Mammary epithelial cell (primary cell): ENCODE measurements at regions of chr7 and their contacts with region 1.

Region 1: DNA sequence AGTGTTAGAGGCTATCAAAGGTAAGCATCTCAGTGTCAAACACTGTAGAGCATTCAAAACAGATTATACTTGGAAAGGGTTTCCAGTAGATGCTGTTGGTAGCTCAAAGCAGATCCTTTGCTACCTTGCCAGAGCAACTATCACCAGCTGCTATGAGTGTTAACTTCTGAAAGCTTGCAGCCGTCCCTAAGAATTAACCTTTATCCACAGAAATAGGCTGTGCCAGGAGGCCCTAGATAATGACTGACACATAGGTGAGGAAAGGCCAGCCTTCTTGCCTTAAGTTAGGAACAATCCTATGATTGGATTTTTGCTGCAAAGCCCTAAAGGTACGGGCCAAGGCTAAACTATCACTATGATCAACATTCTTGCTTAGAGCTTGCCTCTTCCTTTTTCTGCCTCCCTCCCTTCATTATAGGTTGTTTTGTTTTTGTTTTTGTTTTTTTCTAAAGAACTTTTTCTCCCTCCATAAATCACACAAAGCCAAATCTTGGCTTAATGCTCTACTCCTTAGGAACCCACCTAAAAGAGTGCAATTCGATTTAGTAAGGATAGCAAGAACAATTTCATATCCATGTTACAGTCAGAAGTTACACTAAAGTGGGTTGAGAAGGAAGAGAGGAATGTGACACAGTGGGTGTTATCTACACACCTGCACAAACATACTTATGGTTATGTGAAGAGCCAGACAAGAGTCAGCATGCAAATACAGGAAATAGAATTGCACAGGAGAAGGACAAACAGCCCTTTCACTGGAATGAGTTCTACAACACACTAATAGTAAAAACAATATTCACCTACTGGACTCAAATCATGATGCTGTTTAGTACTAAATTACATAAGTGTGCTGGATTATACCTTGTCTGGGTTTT is 263.0 kb downstream of the DGKB start:
- DNase-seq: peak; percentile 86
- H3K4me3 ChIP-seq: no peak overlapping the region
- H3K27ac ChIP-seq: peak overlapping the region; percentile 6
- H3K4me1 ChIP-seq: peaks cover 17% of the 10 kb centered on the region
- H3K27me3 ChIP-seq: no peaks in the 10 kb centered on the region
- CTCF ChIP-seq: no peak

Region 2: GRCh38 chr7:14507617-14508016 is 131.9 kb before region 1 on chr7:
- CTCF ChIA-PET with region 1: no interaction called
- dilution Hi-C with region 1: no loop called
- in situ Hi-C with region 1: no loop called
- intact Hi-C with region 1: loop called (anchors 5 kb)
- DNase-seq: peak; percentile 94
- H3K4me3 ChIP-seq: no peak overlapping the region
- H3K27ac ChIP-seq: no peak overlapping the region
- H3K4me1 ChIP-seq: peaks cover 6% of the 10 kb centered on the region
- H3K27me3 ChIP-seq: no peaks in the 10 kb centered on the region
- CTCF ChIP-seq: no peak